Calu3 (cell line): ENCODE measurements at regions of chr7 and their contacts with region 1.

Region 1: GRCh38 chr7:86904949-86905834 is 154.3 kb downstream of the ELAPOR2 start:
- DNase-seq: peak; percentile 37
- H3K4me3 Mint-ChIP-seq: no peak overlapping the region
- H3K27ac Mint-ChIP-seq: no peak overlapping the region
- H3K4me1 Mint-ChIP-seq: peaks cover 6% of the 10 kb centered on the region
- H3K27me3 Mint-ChIP-seq: no peaks in the 10 kb centered on the region
- CTCF ChIP-seq: peak; percentile 49

Region 2: DNA sequence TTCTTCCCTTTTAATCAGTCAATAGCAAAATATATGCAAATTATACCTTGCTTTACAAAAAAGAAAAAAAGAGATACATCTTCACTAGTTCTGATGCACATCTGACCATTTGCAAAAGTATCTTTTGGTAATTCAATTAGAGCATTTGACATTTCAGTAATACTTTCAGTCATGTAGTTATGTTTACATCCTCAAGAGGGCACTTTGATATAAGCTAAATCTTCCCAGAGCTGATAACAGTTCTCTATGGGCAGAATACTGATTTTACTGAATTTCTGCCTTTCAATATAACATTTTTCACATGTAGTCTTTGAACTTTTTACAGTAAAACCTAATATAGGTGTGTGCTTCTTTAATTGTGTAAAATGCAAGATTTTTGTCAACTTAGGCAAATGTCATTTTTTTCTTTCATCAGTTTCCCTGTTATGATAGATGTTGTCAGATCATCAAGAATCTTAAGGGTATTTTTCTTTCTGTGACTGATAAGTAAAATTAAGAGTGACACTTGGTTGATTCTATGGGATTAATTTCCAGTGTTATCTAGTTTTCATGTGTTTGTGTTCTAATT is 1014.9 kb before region 1 on chr7:
- CTCF ChIA-PET with region 1: interaction called, 7 read pairs
- intact Hi-C with region 1: loop called (anchors 2 kb)
- DNase-seq: no peak
- H3K4me3 Mint-ChIP-seq: no peak overlapping the region
- H3K27ac Mint-ChIP-seq: no peak overlapping the region
- H3K4me1 Mint-ChIP-seq: no peaks in the 10 kb centered on the region
- H3K27me3 Mint-ChIP-seq: no peaks in the 10 kb centered on the region
- CTCF ChIP-seq: no peak

Region 3: GRCh38 chr7:86469680-86470295 is 435.4 kb before region 1 on chr7:
- CTCF ChIA-PET with region 1: interaction called, 4 read pairs
- intact Hi-C with region 1: loop called (anchors 5 kb)
- DNase-seq: peak; percentile 58
- H3K4me3 Mint-ChIP-seq: no peak overlapping the region
- H3K27ac Mint-ChIP-seq: no peak overlapping the region
- H3K4me1 Mint-ChIP-seq: no peaks in the 10 kb centered on the region
- H3K27me3 Mint-ChIP-seq: no peaks in the 10 kb centered on the region
- CTCF ChIP-seq: peak; percentile 60

Region 4: DNA sequence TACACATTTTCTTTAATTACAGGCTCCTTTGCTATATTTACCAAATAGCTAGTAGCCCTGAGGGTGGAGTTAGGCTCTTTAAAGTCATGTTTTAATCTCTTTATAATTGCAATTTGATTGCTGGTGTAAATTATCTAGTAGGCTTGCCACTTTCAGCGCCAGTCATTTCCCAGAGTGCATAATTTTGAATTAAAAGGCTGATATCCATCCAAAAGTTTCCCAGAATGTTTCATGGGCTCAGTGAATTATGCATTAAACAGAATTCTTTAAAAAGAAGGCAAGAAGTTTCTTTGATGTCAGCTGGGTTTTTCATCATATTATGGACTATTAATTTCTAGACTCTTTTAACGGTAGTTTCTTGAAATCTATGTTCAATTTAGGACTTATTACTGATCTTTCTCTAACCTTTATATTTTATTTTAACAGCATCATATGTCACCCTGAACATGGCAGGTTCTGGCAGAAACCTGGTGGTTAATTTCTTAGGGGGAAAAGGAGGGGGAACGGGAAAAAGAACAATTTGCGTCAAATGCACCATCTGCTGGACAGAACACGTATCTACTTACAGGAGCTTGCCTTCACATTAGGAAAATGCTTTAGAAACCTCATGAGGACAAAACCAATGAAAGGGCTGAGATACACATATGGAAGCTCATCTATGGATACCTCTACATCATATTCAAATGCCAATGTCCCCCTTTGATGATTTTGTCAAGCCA is 90.4 kb before region 1 on chr7:
- CTCF ChIA-PET with region 1: interaction called, 4 read pairs
- intact Hi-C with region 1: loop called (anchors 2 kb)
- DNase-seq: peak; percentile 1
- H3K4me3 Mint-ChIP-seq: no peak overlapping the region
- H3K27ac Mint-ChIP-seq: no peak overlapping the region
- H3K4me1 Mint-ChIP-seq: peaks cover 9% of the 10 kb centered on the region
- H3K27me3 Mint-ChIP-seq: no peaks in the 10 kb centered on the region
- CTCF ChIP-seq: no peak